Aorta (tissue), 5 donors: ENCODE measurements at regions of chr3 and their contacts with region 1.

Region 1: GRCh38 chr3:34683851-34684250 is 885.4 kb downstream of the PDCD6IP start:
- DNase-seq: peak; percentile 77 to 88
- ATAC-seq: no peak
- H3K4me3 ChIP-seq: no peak overlapping the region
- H3K27ac ChIP-seq: no peak overlapping the region
- H3K4me1 ChIP-seq: no peaks in the 10 kb centered on the region
- H3K27me3 ChIP-seq: no peaks in the 10 kb centered on the region

Region 2: DNA sequence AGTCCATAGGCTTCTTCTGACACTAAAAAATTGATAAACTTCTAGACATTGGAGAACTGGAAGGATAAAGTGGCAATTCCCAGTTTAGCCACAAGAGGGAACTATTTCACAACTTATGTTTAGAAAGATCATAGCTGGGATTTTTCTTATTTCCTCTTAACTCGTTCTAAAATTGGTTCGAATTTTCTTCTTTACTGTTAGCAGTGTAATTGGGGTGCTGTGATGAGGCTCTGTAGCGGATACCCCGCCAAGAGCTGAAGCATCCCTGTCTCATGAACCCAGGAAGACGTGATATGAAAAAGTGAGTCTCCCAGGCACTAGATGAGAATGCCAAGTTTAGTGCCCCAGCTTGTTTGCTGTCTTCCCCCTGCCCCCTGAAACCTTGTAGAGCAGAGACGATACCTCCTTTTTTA is 800.3 kb before region 1 on chr3:
- intact Hi-C with region 1: loop called (anchors 5 kb)
- DNase-seq: no peak
- ATAC-seq: peak; percentile 53
- H3K4me3 ChIP-seq: peak overlapping the region in 1 of 2 donors; percentile 15
- H3K27ac ChIP-seq: no peak overlapping the region
- H3K4me1 ChIP-seq: no peaks in the 10 kb centered on the region
- H3K27me3 ChIP-seq: no peaks in the 10 kb centered on the region

Region 3: GRCh38 chr3:33980252-33980651 is 703.6 kb before region 1 on chr3:
- intact Hi-C with region 1: loop called in 1 of 2 experiments (anchors 2 kb)
- DNase-seq: no peak
- ATAC-seq: no peak
- H3K4me3 ChIP-seq: no peak overlapping the region
- H3K27ac ChIP-seq: no peak overlapping the region
- H3K4me1 ChIP-seq: peaks cover 0 to 2% of the 10 kb centered on the region in 2 donors
- H3K27me3 ChIP-seq: no peaks in the 10 kb centered on the region

Region 4: DNA sequence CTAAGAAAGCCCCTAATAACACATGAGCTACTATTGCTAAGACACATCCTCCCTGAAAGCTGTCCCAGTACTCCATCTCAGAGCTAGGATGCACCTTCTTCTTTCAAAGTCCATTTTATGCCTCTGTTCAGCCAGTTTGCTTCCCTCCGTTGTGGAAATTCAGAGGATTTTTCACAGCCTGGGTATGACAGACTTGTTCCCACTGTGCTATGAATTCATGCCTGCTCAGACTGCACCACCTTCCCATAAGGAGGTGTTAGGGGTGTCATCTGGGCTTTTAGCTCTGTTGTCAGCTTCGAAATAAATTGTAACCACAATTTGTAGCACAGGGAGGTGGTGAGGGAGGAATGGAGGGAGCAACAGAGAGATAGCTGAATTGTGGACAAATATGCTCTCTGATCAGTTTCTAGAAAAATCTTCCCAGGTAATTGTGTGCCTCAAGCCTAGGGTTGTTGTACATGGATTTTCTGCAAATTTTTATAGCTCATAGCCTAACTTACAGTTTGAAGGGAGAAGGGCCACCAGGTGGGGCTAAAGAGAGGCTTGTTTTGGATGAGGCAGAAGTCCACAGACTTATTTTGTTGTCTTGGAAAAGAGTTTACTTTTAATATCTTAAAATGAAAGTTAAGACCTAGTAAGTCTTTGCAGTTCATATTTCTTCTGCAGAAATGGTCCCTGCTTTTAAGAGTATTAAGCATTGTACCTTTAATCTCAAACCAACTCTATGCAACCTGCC is 423.4 kb before region 1 on chr3:
- intact Hi-C with region 1: loop called in 1 of 2 experiments (anchors 5 kb)
- DNase-seq: peak; percentile 60 to 77
- ATAC-seq: no peak
- H3K4me3 ChIP-seq: no peak overlapping the region
- H3K27ac ChIP-seq: no peak overlapping the region
- H3K4me1 ChIP-seq: peaks cover 6 to 24% of the 10 kb centered on the region in 2 donors
- H3K27me3 ChIP-seq: no peaks in the 10 kb centered on the region

Region 5: DNA sequence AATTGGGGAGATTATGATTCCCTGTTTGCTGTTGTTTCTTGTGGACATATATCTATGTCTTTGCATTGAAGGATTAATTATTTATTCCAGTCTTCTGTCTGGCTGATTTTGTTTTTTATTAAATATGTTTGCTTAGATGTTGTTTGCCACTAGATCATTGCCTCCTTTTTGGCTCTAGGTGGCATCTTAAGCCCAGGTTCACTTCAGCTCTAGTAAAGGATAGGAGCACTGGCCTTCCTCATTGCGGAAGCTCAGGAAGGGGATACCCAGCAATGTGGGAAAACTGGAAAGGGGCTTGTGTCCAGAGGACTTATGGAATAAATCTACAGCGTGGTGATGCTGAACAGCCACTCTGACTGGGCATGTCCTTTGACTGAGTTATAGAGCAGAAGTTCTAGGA is 63.9 kb before region 1 on chr3:
- intact Hi-C with region 1: no loop called
- DNase-seq: no peak
- ATAC-seq: no peak
- H3K4me3 ChIP-seq: no peak overlapping the region
- H3K27ac ChIP-seq: no peak overlapping the region
- H3K4me1 ChIP-seq: no peaks in the 10 kb centered on the region
- H3K27me3 ChIP-seq: no peaks in the 10 kb centered on the region

Region 6: GRCh38 chr3:34920806-34921205 is 237.0 kb after region 1 on chr3:
- intact Hi-C with region 1: no loop called
- DNase-seq: no peak
- ATAC-seq: no peak
- H3K4me3 ChIP-seq: no peak overlapping the region
- H3K27ac ChIP-seq: no peak overlapping the region
- H3K4me1 ChIP-seq: no peaks in the 10 kb centered on the region
- H3K27me3 ChIP-seq: no peaks in the 10 kb centered on the region